Activated CD4-positive, alpha-beta memory T cell treated with anti-CD3 and anti-CD28 coated beads for 36 hours (primary cell): ENCODE measurements at regions of chr12 and their contacts with region 1.

Region 1: GRCh38 chr12:75658901-75659383 is 147.5 kb upstream of the KRR1 start:
- DNase-seq: peak; percentile 27
- H3K4me3 Mint-ChIP-seq: no peak overlapping the region
- H3K27ac Mint-ChIP-seq: no peak overlapping the region
- H3K4me1 Mint-ChIP-seq: peaks cover 14% of the 10 kb centered on the region
- H3K27me3 Mint-ChIP-seq: peaks cover under 1% of the 10 kb centered on the region

Region 2: GRCh38 chr12:75712252-75712651 is 53.3 kb after region 1 on chr12:
- CTCF ChIA-PET with region 1: no interaction called
- POLR2A ChIA-PET with region 1: no interaction called
- intact Hi-C with region 1: loop called (anchors 5 kb)
- DNase-seq: no peak
- H3K4me3 Mint-ChIP-seq: no peak overlapping the region
- H3K27ac Mint-ChIP-seq: no peak overlapping the region
- H3K4me1 Mint-ChIP-seq: peaks cover 11% of the 10 kb centered on the region
- H3K27me3 Mint-ChIP-seq: no peaks in the 10 kb centered on the region